ENCODE measurements at regions of chr19 and their contacts with region 1.

Region 1: GRCh38 chr19:40750059-40750873 is at the start of gene ACTMAP:
- H3K4me3 ChIP-seq: peak within 1 kb of the TSS; percentile 64
- H3K27ac ChIP-seq: peak within 1 kb of the TSS; percentile 93
- H3K4me1 ChIP-seq: peaks cover 32% of the 10 kb centered on the region
- CTCF ChIP-seq: no peak

Region 2: DNA sequence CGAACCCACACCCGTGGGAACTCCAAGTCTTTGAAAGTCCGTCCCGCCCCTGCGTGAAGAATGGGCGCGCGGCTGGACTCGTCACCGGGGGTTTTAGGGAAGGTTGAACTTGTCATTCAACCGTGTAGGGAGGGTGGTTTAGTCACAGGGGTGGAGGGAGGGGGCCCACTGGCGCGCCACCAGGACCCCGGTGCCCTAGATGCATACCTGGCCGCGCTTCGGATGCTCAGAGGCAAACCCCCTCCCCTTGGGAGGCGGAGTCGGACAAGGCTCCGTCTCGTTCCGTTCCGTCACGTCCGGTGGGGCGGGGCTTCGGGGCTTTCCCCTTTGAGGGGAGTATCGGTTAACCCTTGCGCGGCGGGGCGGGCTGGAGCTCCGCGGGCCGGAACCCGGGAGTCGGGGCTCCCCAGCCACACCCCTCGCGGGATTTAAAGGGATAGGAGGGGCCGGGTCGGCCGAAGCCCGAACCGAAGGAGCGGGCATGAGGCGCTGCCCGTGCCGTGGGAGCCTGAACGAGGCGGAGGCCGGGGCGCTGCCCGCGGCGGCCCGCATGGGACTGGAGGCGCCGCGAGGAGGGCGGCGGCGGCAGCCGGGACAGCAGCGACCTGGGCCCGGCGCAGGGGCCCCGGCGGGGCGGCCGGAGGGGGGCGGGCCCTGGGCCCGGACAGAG is 33.5 kb before region 1 on chr19 and contains the starts of genes COQ8B and ITPKC:
- CTCF ChIA-PET with region 1: interaction called, 8 read pairs
- POLR2A ChIA-PET with region 1: interaction called, 49 read pairs
- H3K4me3 ChIP-seq: peak within 1 kb of the TSS; percentile 60
- H3K27ac ChIP-seq: peak within 1 kb of the TSS; percentile 86
- H3K4me1 ChIP-seq: peaks cover 47% of the 10 kb centered on the region
- CTCF ChIP-seq: peak; percentile 47

Region 3: DNA sequence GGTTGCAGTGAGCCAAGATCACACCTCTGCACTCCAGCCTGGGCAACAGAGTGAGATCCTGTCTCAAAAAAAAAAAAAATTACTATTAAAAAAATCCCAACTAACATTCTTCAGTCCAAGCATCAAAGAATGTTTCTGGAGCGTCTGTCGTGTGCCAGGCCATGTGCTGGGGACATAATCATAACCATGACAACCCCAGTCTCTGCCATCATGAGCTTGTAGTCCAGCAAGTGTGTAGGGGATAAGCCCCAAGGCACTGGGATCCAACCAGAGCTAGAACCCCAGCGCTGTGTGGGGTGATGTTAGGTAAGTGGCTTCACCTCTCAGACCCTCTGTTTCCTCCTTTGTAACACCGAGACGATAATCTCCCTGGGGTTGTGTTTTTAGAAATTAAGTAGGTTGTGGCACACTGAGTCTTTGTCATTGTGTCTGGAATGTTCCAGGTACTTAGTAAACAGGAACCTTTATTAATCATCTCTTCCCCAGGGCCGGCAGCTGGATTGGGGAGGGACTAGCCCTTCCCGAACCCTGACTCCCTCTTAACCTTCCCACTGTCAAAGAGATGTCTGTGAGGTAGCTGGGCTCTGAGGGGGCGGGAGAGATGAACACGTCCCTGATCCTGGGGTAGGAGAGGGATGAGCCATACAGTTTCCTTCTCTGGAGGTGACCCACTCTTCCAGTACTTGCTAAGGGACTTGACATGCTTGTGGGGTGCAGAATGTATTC is 28.2 kb before region 1 on chr19:
- CTCF ChIA-PET with region 1: interaction called, 8 read pairs
- POLR2A ChIA-PET with region 1: interaction called, 49 read pairs
- H3K4me3 ChIP-seq: no peak overlapping the region
- H3K27ac ChIP-seq: no peak overlapping the region
- H3K4me1 ChIP-seq: peaks cover 27% of the 10 kb centered on the region
- CTCF ChIP-seq: no peak

Region 4: DNA sequence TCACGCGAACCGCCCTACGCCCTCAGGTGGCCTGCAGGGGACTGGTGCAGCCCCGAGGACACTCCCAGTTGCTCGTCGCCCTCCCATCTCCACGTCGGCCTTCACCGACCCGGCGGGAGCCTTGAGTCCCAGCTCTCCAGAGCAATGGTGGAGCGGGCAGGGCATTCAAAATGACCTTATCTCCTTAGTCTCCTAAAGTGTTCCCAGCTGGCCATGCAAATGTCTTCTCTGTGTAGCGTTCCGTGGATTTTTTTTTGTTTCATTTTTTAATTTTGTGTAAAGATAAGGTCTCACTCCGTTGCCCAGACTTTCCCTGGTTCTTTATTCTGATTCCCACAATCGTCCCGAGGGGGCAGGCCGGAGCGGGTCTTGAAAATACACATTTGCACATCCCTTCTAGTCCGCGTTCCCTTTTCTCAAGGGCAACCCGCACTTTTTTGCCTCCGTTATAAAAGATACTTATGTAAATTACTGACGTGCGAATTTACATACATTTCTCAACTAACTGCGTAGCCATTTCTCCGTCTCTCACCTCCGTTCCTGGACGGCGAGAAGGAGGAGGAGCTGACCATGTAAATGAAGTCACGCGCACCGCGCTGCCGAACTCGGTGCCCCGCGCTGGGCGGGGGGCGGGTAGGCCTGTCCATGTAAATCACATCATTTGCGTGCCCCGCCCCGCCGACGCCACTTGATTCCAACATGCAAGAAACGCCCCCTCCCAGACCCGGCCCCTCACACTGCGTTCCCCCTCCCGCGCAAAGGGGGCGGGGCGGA is 48.1 kb after region 1 on chr19:
- CTCF ChIA-PET with region 1: no interaction called
- POLR2A ChIA-PET with region 1: interaction called, 56 read pairs
- H3K4me3 ChIP-seq: peak overlapping the region; percentile 44
- H3K27ac ChIP-seq: peak overlapping the region; percentile 92
- H3K4me1 ChIP-seq: peaks cover 39% of the 10 kb centered on the region
- CTCF ChIP-seq: peak; percentile 94

Region 5: DNA sequence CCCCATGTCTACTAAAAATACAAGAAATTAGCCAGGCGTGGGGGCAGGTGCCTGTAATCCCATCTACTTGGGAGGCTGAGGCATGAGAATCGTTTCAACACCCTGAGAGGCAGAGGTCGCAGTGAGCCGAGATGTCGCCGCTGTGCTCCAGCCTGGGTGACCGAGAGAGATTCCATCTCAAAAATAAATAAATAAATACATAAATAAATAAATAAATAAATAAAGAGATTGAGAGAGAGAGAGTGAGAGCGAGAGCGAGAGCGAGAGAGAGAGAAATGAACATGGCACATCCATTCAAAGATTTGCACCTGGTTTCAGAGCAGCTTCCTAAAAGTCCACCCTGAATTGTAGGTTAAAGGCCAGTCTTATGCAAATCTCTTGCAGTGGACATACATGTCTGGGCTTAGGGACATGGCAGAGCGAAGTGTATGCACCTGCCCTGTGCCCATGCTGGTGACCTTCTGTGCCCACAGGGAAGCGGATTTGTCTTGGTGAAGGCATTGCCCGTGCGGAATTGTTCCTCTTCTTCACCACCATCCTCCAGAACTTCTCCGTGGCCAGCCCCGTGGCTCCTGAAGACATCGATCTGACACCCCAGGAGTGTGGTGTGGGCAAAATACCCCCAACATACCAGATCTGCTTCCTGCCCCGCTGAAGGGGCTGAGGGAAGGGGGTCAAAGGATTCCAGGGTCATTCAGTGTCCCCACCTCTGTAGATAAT is 198.5 kb after region 1 on chr19:
- CTCF ChIA-PET with region 1: no interaction called
- POLR2A ChIA-PET with region 1: no interaction called
- H3K4me3 ChIP-seq: no peak overlapping the region
- H3K27ac ChIP-seq: no peak overlapping the region
- H3K4me1 ChIP-seq: no peaks in the 10 kb centered on the region
- CTCF ChIP-seq: no peak

Region 6: GRCh38 chr19:41205994-41206393 is 455.7 kb after region 1 on chr19:
- CTCF ChIA-PET with region 1: no interaction called
- POLR2A ChIA-PET with region 1: no interaction called
- H3K4me3 ChIP-seq: no peak overlapping the region
- H3K27ac ChIP-seq: no peak overlapping the region
- H3K4me1 ChIP-seq: no peaks in the 10 kb centered on the region
- CTCF ChIP-seq: no peak

Measured in HEK293 (cell line).